ENCODE measurements at regions of chr7 and their contacts with region 1.

Region 1: DNA sequence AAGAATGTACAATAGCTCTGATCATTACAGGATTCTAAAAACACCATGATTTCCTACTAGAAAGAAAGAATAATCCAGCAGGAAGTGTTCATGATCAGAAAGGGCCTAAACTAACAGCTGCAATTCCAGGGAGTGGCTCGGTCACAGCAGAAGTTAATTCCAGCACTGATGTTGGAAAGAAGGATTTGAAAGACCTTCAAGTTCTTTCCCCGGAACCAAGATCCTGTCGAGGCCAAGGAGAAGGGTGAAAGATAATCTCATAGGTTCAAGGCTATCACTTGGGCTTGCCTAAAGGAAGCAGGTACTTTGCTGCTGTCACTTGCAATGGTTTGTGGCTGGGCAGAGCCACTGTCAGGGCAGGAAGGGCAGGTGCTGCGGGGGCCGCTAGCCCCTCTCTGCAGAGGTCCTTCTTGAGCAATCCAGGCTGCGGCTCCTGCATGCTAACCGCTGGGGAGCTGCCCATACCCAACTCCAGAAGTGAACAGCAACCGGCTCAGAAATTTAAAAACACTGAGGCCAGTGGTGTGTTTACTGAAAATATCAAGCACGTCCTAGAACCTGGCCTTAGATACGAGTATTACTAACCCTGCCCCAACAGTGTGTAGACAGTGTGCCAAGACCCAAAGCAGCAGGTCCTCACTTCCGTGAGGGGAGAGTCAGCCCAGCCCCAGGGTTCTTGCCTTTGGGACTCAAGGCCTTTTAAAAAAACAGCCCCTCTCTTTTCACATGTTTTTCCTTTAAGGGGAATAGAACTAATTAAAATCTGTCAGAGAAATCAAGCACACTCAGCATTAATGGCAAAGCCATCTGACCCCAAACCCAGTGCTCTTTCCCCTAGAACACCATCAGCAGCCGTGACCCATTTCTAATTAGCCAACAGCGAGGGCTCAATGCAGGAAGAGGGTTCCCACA is 76.8 kb downstream of the VIPR2 start:
- DNase-seq: no peak
- ATAC-seq: no peak
- H3K4me3 ChIP-seq: no peak overlapping the region
- H3K27ac ChIP-seq: no peak overlapping the region
- H3K4me1 ChIP-seq: peaks cover 0 to 10% of the 10 kb centered on the region in 2 experiments; a peak in 1 of 5 replicates
- H3K27me3 ChIP-seq: peaks cover 73 to 82% of the 10 kb centered on the region in 2 experiments
- CTCF ChIP-seq: no peak
- EP300 ChIP-seq: no peak
- POLR2A ChIP-seq: no peak
- RAD21 ChIP-seq: no peak

Region 2: DNA sequence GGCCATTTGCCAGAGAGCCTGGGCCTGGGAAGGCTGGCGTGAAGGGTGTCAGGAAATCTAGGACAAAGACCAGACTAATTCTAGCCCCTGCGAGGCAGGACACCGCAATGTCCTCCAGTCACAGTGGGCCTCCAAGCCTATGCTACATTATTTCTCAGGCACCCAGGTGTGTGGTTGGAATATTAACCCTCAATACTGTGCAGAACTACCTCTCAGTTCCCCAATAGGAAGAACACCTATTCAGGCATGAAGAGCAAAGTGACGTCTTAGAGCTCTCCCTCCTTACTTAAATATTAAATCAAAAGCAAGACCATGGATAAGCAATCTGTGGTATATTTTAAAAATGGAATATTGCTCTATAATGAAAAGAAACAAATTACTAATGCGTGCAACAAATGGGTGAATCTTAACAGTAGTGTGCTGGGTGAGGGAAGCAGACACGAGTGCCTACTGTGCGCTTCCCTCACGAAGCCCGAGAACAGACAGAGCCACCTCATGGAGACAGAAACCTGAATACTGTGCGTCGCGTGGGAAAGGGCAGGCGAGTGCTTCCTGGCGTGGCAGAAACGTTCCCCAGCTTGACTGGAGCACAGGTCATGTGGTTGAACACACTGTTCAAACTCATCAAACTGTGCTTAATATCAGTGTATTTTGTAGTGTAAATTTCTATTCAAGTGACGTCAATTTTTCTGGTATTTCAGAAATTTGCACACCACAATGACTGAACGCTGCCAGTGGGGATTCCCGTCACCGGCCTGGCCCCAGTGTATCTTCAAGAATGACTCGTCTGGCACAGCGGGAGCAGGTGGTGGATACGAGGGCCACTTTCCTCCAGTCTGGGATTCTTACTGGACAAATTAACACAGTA is 464.7 kb before region 1 on chr7:
- CTCF ChIA-PET with region 1: no interaction called
- POLR2A ChIA-PET with region 1: no interaction called
- in situ Hi-C with region 1: no loop called
- intact Hi-C with region 1: no loop called
- DNase-seq: no peak
- ATAC-seq: no peak
- H3K4me3 ChIP-seq: no peak overlapping the region
- H3K27ac ChIP-seq: no peak overlapping the region
- H3K4me1 ChIP-seq: peaks cover 0 to 6% of the 10 kb centered on the region in 2 experiments; a peak in 1 of 5 replicates
- H3K27me3 ChIP-seq: no peaks in the 10 kb centered on the region
- CTCF ChIP-seq: no peak
- EP300 ChIP-seq: no peak
- POLR2A ChIP-seq: no peak
- RAD21 ChIP-seq: no peak

Region 3: GRCh38 chr7:159056737-159057136 is 11.1 kb before region 1 on chr7:
- CTCF ChIA-PET with region 1: no interaction called
- POLR2A ChIA-PET with region 1: interaction called, 10 read pairs
- in situ Hi-C with region 1: no loop called
- intact Hi-C with region 1: no loop called
- DNase-seq: no peak
- ATAC-seq: peak; percentile 75
- H3K4me3 ChIP-seq: no peak overlapping the region
- H3K27ac ChIP-seq: no peak overlapping the region
- H3K4me1 ChIP-seq: peaks cover 0 to 3% of the 10 kb centered on the region in 2 experiments; a peak in 1 of 5 replicates
- H3K27me3 ChIP-seq: peaks cover 23 to 58% of the 10 kb centered on the region in 2 experiments; a peak in 4 of 5 replicates
- CTCF ChIP-seq: peak in 1 of 3 experiments; percentile 15; a peak in 1 of 6 replicates
- EP300 ChIP-seq: no peak
- POLR2A ChIP-seq: no peak
- RAD21 ChIP-seq: no peak